ENCODE measurements at regions of chr5 and their contacts with region 1.

Region 1: GRCh38 chr5:138649316-138649720 is 74.1 kb upstream of the HSPA9 start:
- DNase-seq: no peak
- ATAC-seq: peak; percentile 53
- H3K4me3 Mint-ChIP-seq: no peak overlapping the region
- H3K27ac Mint-ChIP-seq: no peak overlapping the region
- H3K4me1 Mint-ChIP-seq: peaks cover 36% of the 10 kb centered on the region
- H3K27me3 Mint-ChIP-seq: no peaks in the 10 kb centered on the region
- CTCF ChIP-seq: no peak

Region 2: DNA sequence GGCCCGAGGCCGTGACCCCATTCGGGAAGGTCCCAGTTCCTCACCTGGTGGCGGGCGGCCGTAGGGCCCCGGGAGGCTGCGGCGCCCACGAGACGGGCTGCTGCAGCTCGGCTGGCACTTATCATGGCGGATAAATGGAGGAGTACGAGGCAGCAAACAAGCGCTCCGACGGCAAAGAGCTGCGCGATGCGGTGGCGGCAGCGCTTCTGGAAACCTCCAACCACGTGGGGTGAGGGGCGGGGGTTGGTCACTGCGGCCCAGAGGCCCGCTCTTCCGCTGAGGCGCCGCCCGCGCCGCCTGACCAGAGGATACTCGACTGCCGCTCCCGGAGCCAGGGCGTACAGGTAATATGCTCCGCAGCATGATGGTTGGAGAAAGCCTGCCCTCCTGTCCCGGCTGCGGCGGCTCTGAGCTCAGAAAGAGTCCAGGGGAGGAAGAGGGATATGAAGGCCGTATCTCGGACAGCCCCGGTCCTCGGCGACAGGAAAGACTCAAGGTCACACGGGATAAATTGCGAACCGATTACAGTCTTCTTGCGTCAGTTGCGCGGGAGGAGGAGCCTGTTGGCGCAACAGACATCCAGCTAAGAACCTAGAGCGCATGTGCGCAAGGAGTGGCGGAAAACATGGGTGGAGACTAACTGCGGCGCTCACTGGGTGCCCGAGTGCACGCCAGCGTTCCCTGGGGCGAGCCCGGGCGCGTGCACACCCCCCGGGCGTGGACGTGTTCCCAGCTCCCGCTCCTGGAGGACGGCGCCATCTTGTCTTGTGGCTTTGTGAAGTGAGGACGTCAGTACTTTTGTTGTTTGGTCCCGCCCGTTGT is 73.9 kb before region 1 on chr5 and contains the start of gene HSPA9:
- CTCF ChIA-PET with region 1: interaction called, 13 read pairs
- POLR2A ChIA-PET with region 1: interaction called, 5 read pairs
- DNase-seq: peak; percentile 91
- ATAC-seq: peak; percentile 83
- H3K4me3 Mint-ChIP-seq: peak within 1 kb of the TSS; percentile 97
- H3K27ac Mint-ChIP-seq: peak within 1 kb of the TSS; percentile 100
- H3K4me1 Mint-ChIP-seq: peaks cover 10% of the 10 kb centered on the region
- H3K27me3 Mint-ChIP-seq: no peaks in the 10 kb centered on the region; the same call in 1 of the 2 replicates
- CTCF ChIP-seq: no peak
- total RNA-seq, gene HSPA9: 313 to 414 TPM (median 328 TPM) in 3 replicates

Region 3: DNA sequence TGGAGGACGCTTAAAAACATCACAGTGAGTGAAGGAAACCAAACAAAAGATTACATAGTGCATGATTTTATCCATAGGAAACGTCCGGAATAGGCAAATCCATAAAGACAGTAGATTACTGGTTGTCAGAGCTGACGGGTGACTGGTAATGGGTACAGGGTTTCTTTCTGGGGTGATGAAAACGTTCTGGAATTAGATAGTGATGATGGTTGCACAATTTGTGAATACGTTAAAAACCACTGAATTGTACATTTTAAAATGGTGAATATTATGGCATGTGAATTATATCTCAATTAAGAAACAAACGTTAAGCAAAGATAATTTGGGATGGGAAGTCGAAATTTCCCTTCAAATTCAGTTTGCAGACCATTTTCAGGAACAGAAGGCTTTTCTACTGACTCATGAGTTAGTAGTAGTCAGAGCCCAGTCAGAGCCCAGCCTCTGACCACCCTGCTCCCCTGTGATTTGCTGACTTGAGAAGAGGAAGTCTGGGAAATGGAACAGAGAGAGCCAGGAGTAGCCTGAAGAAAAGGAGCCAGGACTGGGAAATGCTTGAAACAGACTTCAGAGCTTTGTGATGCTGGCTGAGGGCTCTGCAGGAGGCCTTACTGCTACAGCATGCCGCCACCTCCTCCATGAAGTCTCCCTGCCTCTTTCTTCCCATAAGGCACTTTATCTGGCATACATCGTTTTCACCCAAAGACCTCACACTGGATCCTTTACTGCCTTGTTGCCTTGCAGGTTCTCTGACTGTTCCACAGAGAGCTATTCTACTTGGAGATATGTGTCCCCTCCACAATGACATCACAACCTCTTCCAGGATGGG is 57.5 kb after region 1 on chr5:
- CTCF ChIA-PET with region 1: interaction called, 10 read pairs
- POLR2A ChIA-PET with region 1: no interaction called
- DNase-seq: no peak
- ATAC-seq: peak; percentile 61
- H3K4me3 Mint-ChIP-seq: no peak overlapping the region
- H3K27ac Mint-ChIP-seq: no peak overlapping the region
- H3K4me1 Mint-ChIP-seq: peaks cover 50% of the 10 kb centered on the region
- H3K27me3 Mint-ChIP-seq: no peaks in the 10 kb centered on the region
- CTCF ChIP-seq: no peak

Region 4: DNA sequence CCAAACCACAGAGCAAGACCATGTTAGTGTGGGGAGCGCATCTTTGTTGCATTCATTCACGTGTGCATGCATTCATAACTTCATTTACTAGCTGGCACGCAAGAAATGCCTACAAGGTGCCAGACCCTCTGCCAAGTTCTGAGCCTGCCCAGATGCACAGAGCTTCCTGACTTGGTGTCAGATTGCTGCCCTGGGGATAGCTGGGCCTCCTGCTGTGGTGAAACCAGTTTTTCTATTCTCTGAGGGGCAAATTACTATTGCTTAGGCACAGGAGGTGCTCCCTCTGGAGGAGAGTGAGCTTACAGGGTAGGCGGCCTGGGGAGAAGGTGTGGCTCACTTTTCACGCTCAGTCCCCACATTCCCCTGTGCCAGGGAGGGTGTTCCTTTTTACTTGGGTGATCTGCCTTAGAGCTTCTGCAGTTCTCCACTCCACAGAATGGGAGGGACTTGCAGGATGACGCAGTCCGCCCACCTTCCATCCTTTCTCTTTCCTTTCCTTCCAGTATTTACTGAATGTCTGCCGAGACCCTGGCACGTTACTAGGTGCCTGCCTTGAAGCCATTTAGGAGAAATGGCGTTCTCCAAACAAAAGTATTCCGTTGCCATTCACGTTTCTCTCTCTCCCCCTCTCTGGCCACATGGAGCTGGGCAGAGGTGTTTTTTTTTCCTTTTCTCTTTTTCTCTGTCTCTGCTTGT is 76.0 kb after region 1 on chr5:
- CTCF ChIA-PET with region 1: interaction called, 12 read pairs
- POLR2A ChIA-PET with region 1: interaction called, 5 read pairs
- DNase-seq: peak; percentile 78
- ATAC-seq: peak; percentile 90
- H3K4me3 Mint-ChIP-seq: peak overlapping the region; percentile 30; the same call in 1 of the 2 replicates
- H3K27ac Mint-ChIP-seq: peak overlapping the region; percentile 96
- H3K4me1 Mint-ChIP-seq: peaks cover 45% of the 10 kb centered on the region
- H3K27me3 Mint-ChIP-seq: no peaks in the 10 kb centered on the region; the same call in 1 of the 2 replicates
- CTCF ChIP-seq: 0 out of 2 replicates have a peak, but pooled peaks have one; percentile 11

Measured in WTC11 (cell line).